Mammary epithelial cell (primary cell): ENCODE measurements at regions of chr6 and their contacts with region 1.

Region 1: GRCh38 chr6:82331031-82331773 is 32.4 kb upstream of the TPBG start:
- DNase-seq: peak; percentile 92
- H3K4me3 ChIP-seq: no peak overlapping the region
- H3K27ac ChIP-seq: peak overlapping the region; percentile 2
- H3K4me1 ChIP-seq: peaks cover 14% of the 10 kb centered on the region
- H3K27me3 ChIP-seq: no peaks in the 10 kb centered on the region
- CTCF ChIP-seq: peak; percentile 15 to 47

Region 2: GRCh38 chr6:82283771-82284410 is 47.3 kb before region 1 on chr6:
- CTCF ChIA-PET with region 1: no interaction called
- dilution Hi-C with region 1: no loop called
- in situ Hi-C with region 1: no loop called
- intact Hi-C with region 1: no loop called
- DNase-seq: no peak
- H3K4me3 ChIP-seq: no peak overlapping the region
- H3K27ac ChIP-seq: no peak overlapping the region
- H3K4me1 ChIP-seq: no peaks in the 10 kb centered on the region
- H3K27me3 ChIP-seq: no peaks in the 10 kb centered on the region
- CTCF ChIP-seq: no peak

Region 3: GRCh38 chr6:82419132-82419581 is 88.0 kb after region 1 on chr6:
- CTCF ChIA-PET with region 1: no interaction called
- dilution Hi-C with region 1: no loop called
- in situ Hi-C with region 1: no loop called
- intact Hi-C with region 1: no loop called
- DNase-seq: no peak
- H3K4me3 ChIP-seq: no peak overlapping the region
- H3K27ac ChIP-seq: no peak overlapping the region
- H3K4me1 ChIP-seq: peaks cover 11% of the 10 kb centered on the region
- H3K27me3 ChIP-seq: no peaks in the 10 kb centered on the region
- CTCF ChIP-seq: no peak

Region 4: GRCh38 chr6:82458147-82458546 is 126.9 kb after region 1 on chr6:
- CTCF ChIA-PET with region 1: no interaction called
- dilution Hi-C with region 1: no loop called
- in situ Hi-C with region 1: no loop called
- intact Hi-C with region 1: loop called (anchors 10 kb)
- DNase-seq: peak; percentile 99
- H3K4me3 ChIP-seq: no peak overlapping the region
- H3K27ac ChIP-seq: peak overlapping the region; percentile 58
- H3K4me1 ChIP-seq: peaks cover 17% of the 10 kb centered on the region
- H3K27me3 ChIP-seq: no peaks in the 10 kb centered on the region
- CTCF ChIP-seq: no peak

Region 5: DNA sequence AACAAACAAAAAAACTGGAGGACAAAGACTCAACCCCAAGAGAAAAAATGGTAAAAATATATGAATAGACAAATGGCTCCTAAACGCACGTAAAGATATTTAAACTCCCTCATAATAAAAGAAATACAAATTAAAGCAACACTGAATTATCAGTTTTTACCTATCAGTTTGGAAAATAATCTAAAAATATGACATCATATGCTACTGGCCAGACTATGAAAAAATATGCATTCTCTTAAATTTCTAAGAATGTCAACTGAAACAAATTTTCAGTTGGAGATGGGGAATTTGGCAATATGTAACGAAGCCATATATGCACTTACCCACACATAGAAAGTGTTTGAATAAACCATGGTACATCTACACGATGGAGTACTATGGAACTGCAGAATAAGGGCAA is 210.1 kb after region 1 on chr6:
- CTCF ChIA-PET with region 1: no interaction called
- dilution Hi-C with region 1: no loop called
- in situ Hi-C with region 1: no loop called
- intact Hi-C with region 1: loop called (anchors 5 kb)
- DNase-seq: no peak
- H3K4me3 ChIP-seq: no peak overlapping the region
- H3K27ac ChIP-seq: no peak overlapping the region
- H3K4me1 ChIP-seq: no peaks in the 10 kb centered on the region
- H3K27me3 ChIP-seq: no peaks in the 10 kb centered on the region
- CTCF ChIP-seq: no peak

Region 6: GRCh38 chr6:82589509-82590206 is 258.5 kb after region 1 on chr6:
- CTCF ChIA-PET with region 1: no interaction called
- dilution Hi-C with region 1: no loop called
- in situ Hi-C with region 1: no loop called
- intact Hi-C with region 1: loop called (anchors 2 kb)
- DNase-seq: peak; percentile 58
- H3K4me3 ChIP-seq: no peak overlapping the region
- H3K27ac ChIP-seq: no peak overlapping the region
- H3K4me1 ChIP-seq: peaks cover 2% of the 10 kb centered on the region
- H3K27me3 ChIP-seq: no peaks in the 10 kb centered on the region
- CTCF ChIP-seq: peak; percentile 36 to 41

Region 7: GRCh38 chr6:82988904-82989303 is 657.7 kb after region 1 on chr6:
- CTCF ChIA-PET with region 1: no interaction called
- dilution Hi-C with region 1: no loop called
- in situ Hi-C with region 1: no loop called
- intact Hi-C with region 1: no loop called
- DNase-seq: no peak
- H3K4me3 ChIP-seq: no peak overlapping the region
- H3K27ac ChIP-seq: no peak overlapping the region
- H3K4me1 ChIP-seq: no peaks in the 10 kb centered on the region
- H3K27me3 ChIP-seq: no peaks in the 10 kb centered on the region
- CTCF ChIP-seq: no peak